ENCODE measurements at regions of chr3 and their contacts with region 1.

Region 1: GRCh38 chr3:114362815-114363214 is 69.0 kb downstream of the TIGIT start:
- DNase-seq: no peak
- H3K4me3 Mint-ChIP-seq: no peak overlapping the region
- H3K27ac Mint-ChIP-seq: no peak overlapping the region
- H3K4me1 Mint-ChIP-seq: peaks cover 9% of the 10 kb centered on the region
- H3K27me3 Mint-ChIP-seq: no peaks in the 10 kb centered on the region
- CTCF ChIP-seq: peak; percentile 26

Region 2: GRCh38 chr3:114308830-114309229 is 54.0 kb before region 1 on chr3:
- CTCF ChIA-PET with region 1: no interaction called
- intact Hi-C with region 1: no loop called
- DNase-seq: no peak
- H3K4me3 Mint-ChIP-seq: no peak overlapping the region
- H3K27ac Mint-ChIP-seq: no peak overlapping the region
- H3K4me1 Mint-ChIP-seq: no peaks in the 10 kb centered on the region
- H3K27me3 Mint-ChIP-seq: peaks cover 42% of the 10 kb centered on the region
- CTCF ChIP-seq: no peak

Region 3: DNA sequence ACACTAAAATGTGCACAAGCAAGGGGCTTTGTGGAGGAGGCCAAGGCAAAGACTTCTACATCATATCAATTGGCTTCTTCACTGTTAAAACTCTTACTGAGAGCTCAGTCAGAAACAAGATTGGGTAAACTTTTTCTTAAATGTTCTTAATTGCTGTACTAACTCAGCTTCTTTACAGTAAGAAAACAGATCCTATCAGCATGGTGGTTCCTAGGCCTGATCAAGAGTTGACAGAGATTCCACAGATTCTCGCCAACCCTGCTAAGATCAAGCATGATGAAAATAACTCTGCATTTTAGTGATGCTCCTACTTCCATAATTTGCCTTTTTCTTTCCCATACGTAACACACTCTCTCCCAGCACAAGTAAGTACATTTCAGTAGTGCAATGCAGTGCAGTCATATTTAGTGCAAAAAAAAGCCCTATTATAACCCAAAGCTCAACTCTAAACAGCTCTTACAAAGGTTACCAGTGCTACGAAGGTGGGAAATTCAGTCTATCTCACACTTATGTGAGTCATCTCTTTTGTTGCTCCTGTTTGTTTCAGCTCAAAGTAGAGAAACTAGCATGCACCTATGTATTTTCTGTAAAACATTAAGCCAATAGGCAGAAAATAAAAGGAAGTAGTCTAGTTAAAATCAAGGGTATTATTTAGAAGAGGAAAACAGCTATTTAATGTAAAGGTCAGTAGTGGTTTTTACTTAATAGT is 39.1 kb before region 1 on chr3:
- CTCF ChIA-PET with region 1: no interaction called
- intact Hi-C with region 1: loop called (anchors 2 kb)
- DNase-seq: no peak
- H3K4me3 Mint-ChIP-seq: peak overlapping the region; percentile 22
- H3K27ac Mint-ChIP-seq: peak overlapping the region; percentile 46
- H3K4me1 Mint-ChIP-seq: peaks cover 48% of the 10 kb centered on the region
- H3K27me3 Mint-ChIP-seq: no peaks in the 10 kb centered on the region
- CTCF ChIP-seq: no peak